IMR-90 (cell line): ENCODE measurements at regions of chr2 and their contacts with region 1.

Region 1: GRCh38 chr2:133886735-133887660 is 318.7 kb upstream of the NCKAP5 start:
- DNase-seq: peak; percentile 80
- ATAC-seq: peak; percentile 69
- H3K4me3 ChIP-seq: no peak overlapping the region
- H3K27ac ChIP-seq: peak overlapping the region; percentile 71; the same call in 1 of the 2 replicates
- H3K4me1 ChIP-seq: peaks cover 22% of the 10 kb centered on the region
- H3K27me3 ChIP-seq: no peaks in the 10 kb centered on the region
- CTCF ChIP-seq: peak; percentile 73
- POLR2A ChIP-seq: no peak
- RAD21 ChIP-seq: peak; percentile 77

Region 2: DNA sequence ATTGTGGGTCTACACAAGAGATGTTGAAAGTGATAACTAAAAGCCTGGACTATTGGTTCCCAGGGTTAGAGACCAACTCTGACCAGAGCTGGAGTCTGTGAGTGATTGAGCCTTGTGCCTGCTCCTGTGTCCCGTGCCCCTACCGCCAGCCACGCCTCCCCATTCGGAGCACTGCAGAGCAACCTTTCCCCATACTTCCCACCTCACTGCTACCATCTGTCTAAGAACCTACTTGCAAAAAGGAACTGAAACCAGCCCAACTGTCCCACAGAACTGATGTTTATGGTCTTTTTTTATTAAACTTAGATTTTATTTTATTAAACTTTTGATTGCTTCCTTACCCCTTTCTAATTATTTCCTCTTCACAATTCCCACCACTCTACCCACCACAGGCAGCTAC is 66.5 kb after region 1 on chr2:
- CTCF ChIA-PET with region 1: no interaction called
- POLR2A ChIA-PET with region 1: no interaction called
- dilution Hi-C with region 1: no loop called
- in situ Hi-C with region 1: no loop called
- intact Hi-C with region 1: no loop called
- DNase-seq: no peak
- ATAC-seq: no peak
- H3K4me3 ChIP-seq: no peak overlapping the region
- H3K27ac ChIP-seq: no peak overlapping the region
- H3K4me1 ChIP-seq: no peaks in the 10 kb centered on the region
- H3K27me3 ChIP-seq: peaks cover 7% of the 10 kb centered on the region; the same call in 1 of the 2 replicates
- CTCF ChIP-seq: no peak
- POLR2A ChIP-seq: no peak
- RAD21 ChIP-seq: no peak

Region 3: GRCh38 chr2:134014196-134014960 is 127.4 kb after region 1 on chr2:
- CTCF ChIA-PET with region 1: no interaction called
- POLR2A ChIA-PET with region 1: interaction called, 3 read pairs
- dilution Hi-C with region 1: no loop called
- in situ Hi-C with region 1: no loop called
- intact Hi-C with region 1: loop called (anchors 1 kb)
- DNase-seq: peak; percentile 93
- ATAC-seq: peak; percentile 66
- H3K4me3 ChIP-seq: no peak overlapping the region
- H3K27ac ChIP-seq: peak overlapping the region; percentile 99
- H3K4me1 ChIP-seq: peaks cover 30% of the 10 kb centered on the region
- H3K27me3 ChIP-seq: no peaks in the 10 kb centered on the region
- CTCF ChIP-seq: no peak
- POLR2A ChIP-seq: no peak
- RAD21 ChIP-seq: no peak

Region 4: GRCh38 chr2:134207564-134208209 is 320.7 kb after region 1 on chr2:
- CTCF ChIA-PET with region 1: interaction called, 3 read pairs
- POLR2A ChIA-PET with region 1: no interaction called
- dilution Hi-C with region 1: no loop called
- in situ Hi-C with region 1: no loop called
- intact Hi-C with region 1: loop called (anchors 5 kb)
- DNase-seq: peak; percentile 42
- ATAC-seq: peak; percentile 39; the same call in 1 of the 2 replicates
- H3K4me3 ChIP-seq: no peak overlapping the region
- H3K27ac ChIP-seq: no peak overlapping the region
- H3K4me1 ChIP-seq: peaks cover 16% of the 10 kb centered on the region
- H3K27me3 ChIP-seq: no peaks in the 10 kb centered on the region
- CTCF ChIP-seq: peak; percentile 57
- POLR2A ChIP-seq: no peak
- RAD21 ChIP-seq: peak; percentile 57

Region 5: GRCh38 chr2:134375935-134376334 is 488.9 kb after region 1 on chr2:
- CTCF ChIA-PET with region 1: interaction called, 3 read pairs
- POLR2A ChIA-PET with region 1: no interaction called
- dilution Hi-C with region 1: no loop called
- in situ Hi-C with region 1: no loop called
- intact Hi-C with region 1: loop called (anchors 10 kb)
- DNase-seq: peak; percentile 75
- ATAC-seq: peak; percentile 27
- H3K4me3 ChIP-seq: no peak overlapping the region
- H3K27ac ChIP-seq: 0 out of 2 replicates have a peak overlapping the region, but pooled peaks have one; percentile 19
- H3K4me1 ChIP-seq: peaks cover 30% of the 10 kb centered on the region
- H3K27me3 ChIP-seq: no peaks in the 10 kb centered on the region
- CTCF ChIP-seq: peak; percentile 50
- POLR2A ChIP-seq: no peak
- RAD21 ChIP-seq: peak; percentile 58

Region 6: DNA sequence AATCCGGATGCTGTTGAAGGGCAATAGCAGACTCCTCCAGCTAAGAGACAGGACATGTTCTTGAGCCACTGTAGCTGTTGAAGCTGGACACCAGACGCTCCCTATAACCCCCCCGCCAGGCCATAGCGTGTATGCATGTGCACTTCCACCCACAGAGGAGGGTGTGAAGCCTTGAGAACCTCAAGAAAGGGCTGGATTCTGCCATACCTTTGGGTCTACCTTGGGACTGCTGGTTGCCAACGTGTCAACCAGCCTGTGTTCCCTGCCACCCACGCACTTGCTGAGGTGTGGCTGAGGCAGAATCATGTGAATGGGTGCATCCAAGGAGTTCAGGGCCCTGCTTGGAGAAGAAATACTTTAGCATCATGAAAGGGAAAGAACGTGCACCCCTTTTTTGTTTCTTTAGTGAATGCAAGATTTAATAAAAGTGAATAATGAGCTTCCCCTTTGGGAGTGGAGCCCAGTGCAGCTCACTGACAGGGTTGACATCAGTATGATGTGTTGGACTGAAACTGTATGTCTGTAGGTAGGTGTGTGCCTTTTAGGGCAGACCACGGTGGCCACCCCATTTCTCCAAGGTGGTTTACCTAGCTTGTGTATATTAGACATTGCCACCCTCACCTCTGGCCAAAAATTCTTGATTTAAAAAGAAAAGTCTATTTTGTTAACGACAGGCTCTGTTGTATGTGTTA is 565.2 kb after region 1 on chr2:
- CTCF ChIA-PET with region 1: interaction called, 5 read pairs
- POLR2A ChIA-PET with region 1: no interaction called
- dilution Hi-C with region 1: no loop called
- in situ Hi-C with region 1: loop called (anchors 10 kb)
- intact Hi-C with region 1: loop called (anchors 2 kb)
- DNase-seq: no peak
- ATAC-seq: no peak
- H3K4me3 ChIP-seq: no peak overlapping the region
- H3K27ac ChIP-seq: no peak overlapping the region
- H3K4me1 ChIP-seq: no peaks in the 10 kb centered on the region
- H3K27me3 ChIP-seq: no peaks in the 10 kb centered on the region
- CTCF ChIP-seq: no peak
- POLR2A ChIP-seq: no peak
- RAD21 ChIP-seq: no peak

Region 7: DNA sequence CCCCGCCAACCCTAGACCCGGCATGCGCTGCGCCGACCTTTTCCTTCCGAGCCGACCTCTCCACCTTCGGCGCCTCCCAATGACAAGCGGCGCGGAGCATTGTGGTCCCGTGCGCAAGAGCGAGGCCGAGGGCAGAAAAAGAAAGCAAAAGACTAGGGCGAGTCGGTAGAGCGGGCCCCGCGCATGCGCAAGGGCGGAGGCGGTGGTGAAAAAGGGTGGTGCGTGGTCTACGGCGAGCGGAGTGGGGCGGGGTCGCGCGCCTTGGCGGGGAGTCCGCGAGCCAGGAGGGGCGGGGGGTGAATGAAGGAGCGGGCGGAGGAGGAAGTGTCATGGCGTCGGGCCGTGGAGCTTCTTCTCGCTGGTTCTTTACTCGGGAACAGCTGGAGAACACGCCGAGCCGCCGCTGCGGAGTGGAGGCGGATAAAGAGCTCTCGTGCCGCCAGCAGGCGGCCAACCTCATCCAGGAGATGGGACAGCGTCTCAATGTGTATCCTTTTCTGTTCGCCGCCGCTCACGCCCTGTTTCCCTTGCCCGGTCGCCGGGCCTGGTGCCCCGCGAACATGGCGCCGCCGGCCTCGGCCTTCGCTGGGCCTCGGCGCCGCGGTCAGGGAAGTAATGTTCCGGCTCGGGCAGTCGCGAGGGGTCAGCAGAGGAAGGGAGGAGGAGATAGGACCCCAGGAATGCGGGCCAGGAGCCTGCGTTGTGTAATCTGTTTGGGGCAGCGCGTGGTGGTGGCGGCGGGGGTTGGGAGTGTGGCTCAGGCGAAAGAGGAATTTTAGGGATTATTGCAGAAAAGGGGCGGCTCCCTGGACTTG is 1031.7 kb after region 1 on chr2 and contains the start of gene CCNT2:
- CTCF ChIA-PET with region 1: no interaction called
- POLR2A ChIA-PET with region 1: no interaction called
- dilution Hi-C with region 1: no loop called
- in situ Hi-C with region 1: loop called (anchors 25 kb)
- intact Hi-C with region 1: no loop called
- DNase-seq: peak; percentile 98
- ATAC-seq: peak; percentile 91
- H3K4me3 ChIP-seq: peak within 1 kb of the TSS; percentile 89
- H3K27ac ChIP-seq: peak within 1 kb of the TSS; percentile 98
- H3K4me1 ChIP-seq: peaks cover 2% of the 10 kb centered on the region; the same call in 1 of the 2 replicates
- H3K27me3 ChIP-seq: no peaks in the 10 kb centered on the region
- CTCF ChIP-seq: 0 out of 2 replicates have a peak, but pooled peaks have one; percentile 3
- POLR2A ChIP-seq: peak; percentile 87
- RAD21 ChIP-seq: no peak
- total RNA-seq, gene CCNT2: 30.6 and 44.6 TPM in 2 replicates